ENCODE measurements at regions of chr2 and their contacts with region 1.

Region 1: DNA sequence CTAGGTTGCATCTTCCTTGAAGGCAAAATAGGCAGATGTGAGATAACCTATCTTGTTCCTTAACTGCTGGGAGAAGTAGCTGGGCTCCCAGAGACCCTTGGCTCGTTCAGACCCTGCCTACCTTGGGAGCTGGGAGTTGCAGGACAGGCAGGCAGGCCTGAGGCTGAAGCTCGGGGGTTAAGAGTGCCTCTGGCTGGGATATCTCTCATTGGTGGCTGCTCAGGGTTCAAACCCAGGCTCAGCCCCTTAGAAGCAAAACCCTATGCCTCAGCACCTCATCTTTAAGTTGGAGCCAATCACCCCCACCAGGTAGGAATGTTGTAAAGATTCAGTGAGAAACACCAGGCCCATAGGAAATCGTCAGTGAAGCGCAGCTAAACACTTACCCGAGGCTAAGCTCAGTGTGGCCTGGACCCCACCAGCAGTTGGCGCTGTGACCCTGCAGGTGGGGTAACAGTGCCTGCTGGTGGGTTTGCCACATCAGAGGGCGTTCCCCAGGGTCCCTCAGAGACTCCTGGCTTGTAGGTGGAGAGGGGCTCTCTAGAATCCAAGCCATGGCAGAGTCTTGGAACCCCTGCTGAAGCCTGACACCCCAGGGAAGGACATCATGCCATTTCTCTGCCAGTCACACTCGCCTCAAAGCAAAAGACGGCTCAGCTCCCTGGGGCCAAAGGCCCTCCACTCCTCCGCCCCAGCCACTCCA is 54.6 kb upstream of the GPR17 start:
- DNase-seq: peak; percentile 66
- H3K4me3 ChIP-seq: no peak overlapping the region
- H3K27ac ChIP-seq: no peak overlapping the region
- H3K4me1 ChIP-seq: no peaks in the 10 kb centered on the region
- H3K27me3 ChIP-seq: no peaks in the 10 kb centered on the region
- CTCF ChIP-seq: peak; percentile 94 to 99
- POLR2A ChIP-seq: no peak

Region 2: GRCh38 chr2:127536707-127537541 is 54.4 kb before region 1 on chr2:
- CTCF ChIA-PET with region 1: interaction called, 12 read pairs
- POLR2A ChIA-PET with region 1: no interaction called
- dilution Hi-C with region 1: no loop called
- intact Hi-C with region 1: no loop called
- DNase-seq: peak; percentile 6
- H3K4me3 ChIP-seq: no peak overlapping the region
- H3K27ac ChIP-seq: peak overlapping the region; percentile 4
- H3K4me1 ChIP-seq: no peaks in the 10 kb centered on the region
- H3K27me3 ChIP-seq: peaks cover 9 to 12% of the 10 kb centered on the region in 2 experiments
- CTCF ChIP-seq: no peak
- POLR2A ChIP-seq: no peak

Region 3: DNA sequence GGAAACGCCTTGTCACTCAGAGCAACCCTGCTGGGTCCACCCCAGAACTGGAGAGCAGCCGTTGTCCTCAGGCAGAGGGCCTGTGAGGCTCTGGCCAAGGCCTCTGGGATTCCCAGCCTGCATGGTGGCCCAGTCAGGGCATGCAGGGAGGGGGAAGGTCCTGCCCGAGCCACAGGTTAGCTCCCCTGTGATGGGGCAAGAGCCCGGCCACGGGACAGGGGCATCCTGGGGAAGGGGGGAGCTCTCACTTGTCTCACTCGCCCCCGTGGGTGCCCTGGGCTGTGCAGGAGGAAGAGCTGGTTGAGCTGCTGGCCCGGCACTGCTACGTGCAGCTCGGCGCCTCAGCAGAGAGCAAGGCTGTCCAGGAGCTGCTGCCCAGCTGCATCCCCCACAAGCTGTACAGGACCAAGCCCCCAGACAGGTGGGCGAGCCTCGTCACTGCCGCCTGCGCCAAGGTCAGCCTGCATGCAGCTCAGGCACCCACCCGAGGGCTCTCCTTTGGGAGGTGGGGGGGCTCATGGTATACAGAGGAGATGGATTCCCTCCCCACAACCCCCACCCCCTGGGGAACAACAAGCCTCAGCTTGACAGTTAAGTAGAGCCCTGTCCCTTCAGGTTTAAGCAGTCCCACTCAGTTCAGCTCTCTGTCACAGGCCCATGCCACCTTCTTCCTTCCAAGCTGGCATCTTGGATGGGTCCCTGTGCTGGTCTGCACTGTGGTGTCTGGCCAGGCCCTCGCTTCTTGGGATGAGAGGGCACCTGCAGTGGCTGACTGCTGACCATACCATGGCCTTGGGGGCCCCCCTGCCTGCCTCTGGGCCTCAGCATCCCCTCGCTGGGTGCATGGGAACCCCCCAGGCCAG is 33.9 kb after region 1 on chr2:
- CTCF ChIA-PET with region 1: interaction called, 12 read pairs
- POLR2A ChIA-PET with region 1: interaction called, 3 read pairs
- dilution Hi-C with region 1: no loop called
- intact Hi-C with region 1: no loop called
- DNase-seq: no peak
- H3K4me3 ChIP-seq: no peak overlapping the region
- H3K27ac ChIP-seq: no peak overlapping the region
- H3K4me1 ChIP-seq: no peaks in the 10 kb centered on the region
- H3K27me3 ChIP-seq: no peaks in the 10 kb centered on the region
- CTCF ChIP-seq: no peak
- POLR2A ChIP-seq: no peak

Region 4: GRCh38 chr2:127664065-127664894 is 72.9 kb after region 1 on chr2:
- CTCF ChIA-PET with region 1: interaction called, 37 read pairs
- POLR2A ChIA-PET with region 1: no interaction called
- dilution Hi-C with region 1: no loop called
- intact Hi-C with region 1: no loop called
- DNase-seq: peak; percentile 50
- H3K4me3 ChIP-seq: peak overlapping the region in 2 of 3 experiments; percentile 20 to 32
- H3K27ac ChIP-seq: peak overlapping the region; percentile 80
- H3K4me1 ChIP-seq: peaks cover 48% of the 10 kb centered on the region
- H3K27me3 ChIP-seq: no peaks in the 10 kb centered on the region
- CTCF ChIP-seq: no peak
- POLR2A ChIP-seq: peak; percentile 29

Region 5: DNA sequence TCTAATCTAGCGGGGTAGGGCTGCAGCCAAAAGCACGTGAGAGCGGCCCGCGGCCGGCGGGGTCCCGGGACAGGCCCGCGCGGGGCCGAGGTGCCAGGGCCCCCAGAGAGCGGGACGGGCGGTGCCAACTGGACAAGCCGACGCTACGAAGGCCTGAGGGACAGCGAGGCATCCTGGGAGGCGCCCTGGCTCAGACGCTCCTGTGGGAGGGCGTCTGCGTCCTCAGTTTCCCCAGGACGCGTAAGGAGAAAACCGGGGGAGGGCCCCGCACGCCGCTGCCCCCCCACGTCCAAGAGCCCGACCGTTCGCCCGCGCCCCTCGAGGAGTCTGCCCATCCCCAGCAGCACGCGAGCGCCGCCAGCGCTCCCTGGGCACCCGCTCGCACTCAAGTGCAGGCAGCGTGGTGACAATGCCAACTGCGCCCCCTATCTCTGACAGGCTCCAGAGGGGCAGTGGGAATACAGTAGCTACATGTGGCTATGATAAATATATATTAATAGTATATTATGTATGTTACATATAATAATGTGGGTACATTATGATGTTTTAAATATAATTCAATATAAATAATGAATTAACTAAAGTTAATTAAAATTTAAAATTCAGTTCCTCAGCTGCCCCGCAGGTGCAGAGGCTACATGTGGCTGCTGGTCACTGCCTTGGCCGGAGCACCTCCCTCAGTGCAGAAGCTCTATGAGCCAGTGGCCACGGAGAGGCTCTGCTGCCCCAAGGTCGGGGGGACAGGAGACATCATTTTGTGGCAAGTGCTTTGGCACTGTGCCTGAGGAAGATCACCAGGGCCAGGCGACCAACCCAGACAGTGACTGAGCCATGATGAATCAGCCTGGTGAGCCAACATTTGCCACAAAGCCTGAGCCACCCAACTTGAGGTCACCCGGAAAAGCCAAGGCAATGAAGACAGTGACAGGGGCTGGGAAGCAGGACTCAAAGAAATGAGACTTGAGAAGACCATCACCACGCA is 104.4 kb after region 1 on chr2:
- CTCF ChIA-PET with region 1: interaction called, 162 read pairs
- POLR2A ChIA-PET with region 1: interaction called, 5 read pairs
- dilution Hi-C with region 1: no loop called
- intact Hi-C with region 1: loop called (anchors 1 kb)
- DNase-seq: peak; percentile 75
- H3K4me3 ChIP-seq: peak overlapping the region in 2 of 3 experiments; percentile 21 to 22
- H3K27ac ChIP-seq: no peak overlapping the region
- H3K4me1 ChIP-seq: peaks cover 8% of the 10 kb centered on the region
- H3K27me3 ChIP-seq: no peaks in the 10 kb centered on the region
- CTCF ChIP-seq: peak; percentile 60 to 73
- POLR2A ChIP-seq: no peak

Region 6: GRCh38 chr2:127820080-127820668 is 228.8 kb after region 1 on chr2:
- CTCF ChIA-PET with region 1: interaction called, 18 read pairs
- POLR2A ChIA-PET with region 1: no interaction called
- dilution Hi-C with region 1: no loop called
- intact Hi-C with region 1: no loop called
- DNase-seq: no peak
- H3K4me3 ChIP-seq: no peak overlapping the region
- H3K27ac ChIP-seq: no peak overlapping the region
- H3K4me1 ChIP-seq: no peaks in the 10 kb centered on the region
- H3K27me3 ChIP-seq: peaks cover 4 to 10% of the 10 kb centered on the region in 2 experiments
- CTCF ChIP-seq: no peak
- POLR2A ChIP-seq: no peak

Region 7: GRCh38 chr2:127943186-127943585 is 351.8 kb after region 1 on chr2:
- CTCF ChIA-PET with region 1: no interaction called
- POLR2A ChIA-PET with region 1: no interaction called
- dilution Hi-C with region 1: no loop called
- intact Hi-C with region 1: no loop called
- DNase-seq: no peak
- H3K4me3 ChIP-seq: no peak overlapping the region
- H3K27ac ChIP-seq: no peak overlapping the region
- H3K4me1 ChIP-seq: no peaks in the 10 kb centered on the region
- H3K27me3 ChIP-seq: no peaks in the 10 kb centered on the region
- CTCF ChIP-seq: no peak
- POLR2A ChIP-seq: no peak

Measured in endothelial cell of umbilical vein (primary cell).